Endothelial cell of umbilical vein (primary cell): ENCODE measurements at regions of chr9 and their contacts with region 1.

Region 1: DNA sequence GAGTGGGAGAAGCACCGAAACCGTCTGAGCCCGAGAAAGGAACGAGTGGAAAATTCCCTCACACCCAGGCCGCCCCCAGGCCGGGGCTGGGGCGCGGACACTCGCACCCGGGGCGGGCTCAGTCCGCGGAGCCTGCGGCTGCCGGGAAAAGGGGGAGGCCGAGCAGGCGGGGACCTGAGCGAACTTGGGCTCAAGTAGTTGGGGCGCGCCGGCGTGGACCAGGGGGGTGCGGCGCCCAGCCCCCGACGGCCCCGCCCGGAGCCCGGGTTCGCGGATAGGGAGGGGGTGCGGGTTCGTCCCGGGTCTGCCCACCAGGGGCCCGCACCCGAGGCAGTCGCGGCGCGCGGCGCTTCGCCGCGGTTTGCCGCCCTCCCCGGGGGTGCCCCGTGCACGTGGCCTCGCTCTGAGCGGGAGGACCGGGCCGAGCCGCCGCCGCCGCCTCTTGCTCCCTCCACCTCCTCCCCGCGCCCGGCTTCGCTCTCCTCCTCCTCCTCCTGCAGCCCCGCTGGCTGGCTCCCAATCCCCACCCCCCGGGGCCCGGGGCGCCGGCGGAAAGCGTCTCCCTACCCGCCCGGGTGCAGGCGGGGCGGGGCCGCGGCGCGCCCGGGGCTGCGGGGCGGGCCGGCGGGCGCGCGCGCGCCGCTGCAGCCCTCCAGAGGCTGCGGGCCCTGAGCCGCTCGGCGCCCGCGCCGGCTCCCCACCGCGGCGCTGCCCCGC is 1.1 kb upstream of the NFIB start:
- DNase-seq: peak; percentile 67
- H3K4me3 ChIP-seq: peak overlapping the region; percentile 61 to 87 (median 85)
- H3K27ac ChIP-seq: peak overlapping the region; percentile 96
- H3K4me1 ChIP-seq: peaks cover 55% of the 10 kb centered on the region
- H3K27me3 ChIP-seq: no peaks in the 10 kb centered on the region
- CTCF ChIP-seq: no peak
- POLR2A ChIP-seq: no peak

Region 2: DNA sequence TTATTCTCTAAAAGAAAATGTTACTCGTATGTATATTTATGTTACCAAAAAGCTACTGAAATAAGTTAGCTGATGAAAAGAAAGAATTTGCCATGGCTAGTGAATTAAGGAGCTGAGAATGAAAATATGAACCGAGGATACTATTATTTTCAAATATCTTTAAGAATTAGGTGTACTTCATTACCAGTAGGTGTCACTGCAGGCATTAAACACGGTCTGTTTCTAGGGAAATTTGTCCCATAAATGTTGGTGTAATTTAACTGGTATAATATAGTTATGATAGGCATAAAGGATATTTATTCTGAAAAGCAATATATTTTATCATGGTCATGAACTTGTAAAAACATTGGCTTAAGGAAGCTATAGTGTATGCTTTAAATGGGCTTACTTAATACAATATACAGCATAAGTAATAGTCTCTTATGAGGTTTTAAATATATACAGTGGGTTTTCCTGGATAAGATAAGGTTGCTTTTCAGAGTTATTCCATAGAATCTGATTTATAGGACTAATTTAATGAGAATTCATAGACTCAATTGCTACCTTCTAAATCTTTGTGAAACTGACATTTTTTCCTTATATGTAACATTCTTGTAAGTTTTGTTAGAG is 963.2 kb before region 1 on chr9:
- CTCF ChIA-PET with region 1: interaction called, 3 read pairs
- POLR2A ChIA-PET with region 1: no interaction called
- dilution Hi-C with region 1: no loop called
- intact Hi-C with region 1: loop called (anchors 2 kb)
- DNase-seq: peak; percentile 74
- H3K4me3 ChIP-seq: no peak overlapping the region
- H3K27ac ChIP-seq: no peak overlapping the region
- H3K4me1 ChIP-seq: no peaks in the 10 kb centered on the region
- H3K27me3 ChIP-seq: no peaks in the 10 kb centered on the region
- CTCF ChIP-seq: peak; percentile 32 to 37
- POLR2A ChIP-seq: no peak

Region 3: GRCh38 chr9:13915131-13915530 is 400.0 kb before region 1 on chr9:
- CTCF ChIA-PET with region 1: no interaction called
- POLR2A ChIA-PET with region 1: no interaction called
- dilution Hi-C with region 1: no loop called
- intact Hi-C with region 1: no loop called
- DNase-seq: no peak
- H3K4me3 ChIP-seq: no peak overlapping the region
- H3K27ac ChIP-seq: no peak overlapping the region
- H3K4me1 ChIP-seq: no peaks in the 10 kb centered on the region
- H3K27me3 ChIP-seq: no peaks in the 10 kb centered on the region
- CTCF ChIP-seq: no peak
- POLR2A ChIP-seq: no peak

Region 4: GRCh38 chr9:14030375-14031059 is 284.6 kb before region 1 on chr9:
- CTCF ChIA-PET with region 1: no interaction called
- POLR2A ChIA-PET with region 1: no interaction called
- dilution Hi-C with region 1: no loop called
- intact Hi-C with region 1: loop called (anchors 2 kb)
- DNase-seq: peak; percentile 97
- H3K4me3 ChIP-seq: peak overlapping the region in 2 of 3 experiments; percentile 25 to 46
- H3K27ac ChIP-seq: peak overlapping the region; percentile 88
- H3K4me1 ChIP-seq: peaks cover 44% of the 10 kb centered on the region
- H3K27me3 ChIP-seq: no peaks in the 10 kb centered on the region
- CTCF ChIP-seq: no peak
- POLR2A ChIP-seq: peak; percentile 31

Region 5: DNA sequence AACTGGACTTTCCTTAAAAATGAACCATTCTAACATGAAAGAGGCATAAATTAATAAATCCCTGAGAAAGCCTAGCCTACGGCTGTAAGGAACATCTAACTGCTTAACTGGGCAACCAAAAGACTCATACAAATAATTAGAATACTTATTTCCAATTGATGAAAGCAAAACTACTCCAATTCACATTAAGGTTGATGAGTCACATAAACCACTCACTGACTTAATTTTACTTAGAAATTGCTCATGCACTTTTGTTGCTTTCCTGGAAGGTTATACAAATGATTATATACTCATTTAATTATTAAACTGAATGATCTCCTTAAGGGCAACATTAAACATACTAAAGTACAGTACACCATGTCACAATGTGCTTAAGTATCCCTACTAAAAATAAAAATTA is 103.0 kb before region 1 on chr9:
- CTCF ChIA-PET with region 1: no interaction called
- POLR2A ChIA-PET with region 1: no interaction called
- dilution Hi-C with region 1: no loop called
- intact Hi-C with region 1: loop called (anchors 2 kb)
- DNase-seq: peak; percentile 59
- H3K4me3 ChIP-seq: peak overlapping the region in 1 of 3 experiments; percentile 33
- H3K27ac ChIP-seq: peak overlapping the region; percentile 41
- H3K4me1 ChIP-seq: peaks cover 79% of the 10 kb centered on the region
- H3K27me3 ChIP-seq: no peaks in the 10 kb centered on the region
- CTCF ChIP-seq: no peak
- POLR2A ChIP-seq: no peak

Region 6: DNA sequence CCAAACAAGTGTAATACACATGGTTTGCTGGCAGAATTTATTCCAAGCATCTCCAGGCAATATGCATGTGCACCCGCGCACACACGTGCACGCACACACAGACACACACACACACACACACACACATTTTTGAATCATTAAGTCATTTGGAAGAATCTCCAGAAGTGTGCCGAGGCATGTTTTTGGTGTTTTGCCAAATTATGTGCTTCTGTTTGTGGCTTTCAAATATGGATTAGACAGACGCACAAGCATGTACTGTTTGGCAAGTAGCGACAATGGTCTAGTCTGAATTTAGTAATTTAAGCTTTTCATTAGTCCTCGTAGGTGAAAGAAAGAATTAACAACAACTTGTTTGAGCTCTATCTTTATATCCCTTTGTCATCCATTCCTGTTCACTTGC is 37.8 kb before region 1 on chr9:
- CTCF ChIA-PET with region 1: interaction called, 4 read pairs
- POLR2A ChIA-PET with region 1: interaction called, 19 read pairs
- dilution Hi-C with region 1: no loop called
- intact Hi-C with region 1: loop called (anchors 1 kb)
- DNase-seq: peak; percentile 74
- H3K4me3 ChIP-seq: no peak overlapping the region
- H3K27ac ChIP-seq: peak overlapping the region; percentile 79
- H3K4me1 ChIP-seq: peaks cover 75% of the 10 kb centered on the region
- H3K27me3 ChIP-seq: no peaks in the 10 kb centered on the region
- CTCF ChIP-seq: no peak
- POLR2A ChIP-seq: no peak